ENCODE measurements at regions of chr9 and their contacts with region 1.

Region 1: DNA sequence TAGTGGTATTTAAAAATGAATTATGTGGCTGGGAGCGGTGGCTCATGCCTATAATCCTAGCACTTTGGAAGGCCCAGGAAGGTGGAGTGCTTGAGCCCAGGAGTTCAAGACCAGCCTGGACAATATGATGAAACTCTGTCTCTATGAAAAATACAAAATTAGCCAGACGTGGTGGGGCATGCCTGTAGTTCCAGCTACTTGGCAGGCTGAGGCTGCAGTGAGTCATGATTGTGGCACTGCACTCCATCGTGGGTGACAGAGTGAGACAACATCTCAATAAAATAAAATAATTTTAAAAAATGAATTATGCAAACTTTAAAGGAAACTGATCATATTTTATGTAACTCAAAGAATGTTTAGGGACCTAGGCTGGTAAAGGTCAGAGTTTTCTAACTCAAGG is 310.8 kb upstream of the DMRT1 start:
- DNase-seq: no peak
- ATAC-seq: no peak

Region 2: DNA sequence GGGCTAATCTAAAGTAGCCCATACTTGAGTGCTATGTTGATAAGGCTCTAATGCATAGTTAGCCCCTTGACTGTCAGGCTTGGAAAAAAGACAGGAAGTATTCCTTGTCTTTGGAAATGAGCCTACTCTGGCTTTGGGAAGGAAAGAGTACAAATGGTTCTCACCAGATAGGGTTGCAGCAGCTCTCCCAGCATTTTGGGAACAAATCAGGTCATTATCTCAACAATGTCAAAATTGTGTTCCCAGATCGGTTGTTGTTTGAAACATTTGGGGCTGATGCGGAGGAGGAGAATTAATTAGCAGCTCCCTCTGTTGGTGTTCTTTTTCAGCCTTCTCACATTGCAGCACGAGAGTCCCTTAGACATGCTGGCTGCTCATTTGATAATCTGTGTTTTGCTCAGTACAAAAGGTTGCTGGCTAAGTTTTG is 16.1 kb after region 1 on chr9:
- intact Hi-C with region 1: loop called in 1 of 2 experiments (anchors 2 kb)
- DNase-seq: no peak
- ATAC-seq: peak; percentile 31